Naive thymus-derived CD8-positive, alpha-beta T cell (primary cell): ENCODE measurements at regions of chr6 and their contacts with region 1.

Region 1: DNA sequence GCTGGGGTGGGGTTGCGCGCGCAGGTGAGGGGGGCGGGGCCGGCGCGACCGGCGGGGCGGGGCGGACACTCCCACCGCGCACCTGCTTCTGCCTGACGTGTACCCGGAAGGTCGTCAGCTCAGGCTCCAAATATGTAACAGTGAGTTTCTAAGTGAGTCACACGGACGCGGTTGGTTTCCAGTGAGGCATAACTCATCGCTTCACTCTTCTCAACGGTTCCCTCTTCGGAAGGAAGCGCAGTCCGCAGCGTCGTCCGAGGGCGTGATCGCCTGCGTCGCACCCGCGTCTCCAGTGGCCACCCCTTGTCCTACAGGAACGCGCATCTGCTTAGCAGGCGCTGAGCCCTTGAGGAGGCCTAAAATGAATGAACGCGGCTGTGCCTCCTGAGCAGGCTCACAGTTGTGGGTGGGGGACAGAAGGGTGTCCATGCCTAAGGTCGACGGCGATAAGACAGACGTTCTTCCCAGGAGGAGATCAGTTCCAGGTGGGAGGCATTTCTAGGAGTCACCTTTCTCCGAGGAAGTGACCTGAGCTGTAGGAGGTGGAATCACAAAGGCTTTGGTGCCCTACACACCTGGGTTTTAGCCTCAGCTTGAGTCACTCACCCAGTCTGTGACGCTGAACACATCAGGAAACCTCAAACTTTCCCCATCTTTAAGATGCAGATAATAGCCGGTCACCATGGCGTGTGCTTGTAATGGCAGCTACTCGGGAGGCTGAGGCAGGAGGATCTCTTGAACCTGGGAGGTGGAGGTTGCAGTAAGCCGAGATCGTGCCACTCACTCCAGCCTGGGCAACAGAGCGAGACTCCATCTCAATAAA is 50.9 kb upstream of the EZR start:
- DNase-seq: peak in 3 of 10 donors; percentile 85 to 97 (median 97)
- ATAC-seq: peak; percentile 82 to 83
- H3K4me3 Mint-ChIP-seq: peak overlapping the region; percentile 83 to 96 (median 92)
- H3K27ac Mint-ChIP-seq: peak overlapping the region; percentile 95 to 100 (median 100)
- H3K4me1 Mint-ChIP-seq: peaks cover 6 to 58% (median 30%) of the 10 kb centered on the region in 4 donors
- H3K27me3 Mint-ChIP-seq: no peaks in the 10 kb centered on the region

Region 2: DNA sequence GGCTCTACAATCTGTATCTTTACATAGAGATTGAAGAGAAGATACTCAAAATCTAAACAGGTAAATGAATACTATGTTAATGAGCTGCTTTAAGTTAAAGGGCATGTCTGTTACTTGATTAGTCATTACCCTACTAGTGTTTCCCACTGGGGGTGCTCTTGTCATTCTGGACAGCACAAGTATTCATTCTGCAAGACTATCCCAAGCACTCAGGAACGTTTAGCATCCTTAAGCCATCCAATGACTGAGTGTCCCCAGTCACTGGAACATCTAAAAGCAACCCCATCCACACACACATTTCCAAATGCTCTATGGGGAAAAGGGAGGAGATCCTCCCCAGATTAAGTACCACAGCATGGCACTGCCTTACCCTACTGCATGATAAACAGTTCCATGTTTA is 76.6 kb before region 1 on chr6:
- POLR2A ChIA-PET with region 1: interaction called, 48 read pairs
- DNase-seq: peak in 1 of 10 donors; percentile 45
- ATAC-seq: peak; percentile 16 to 17
- H3K4me3 Mint-ChIP-seq: peak overlapping the region in 3 of 10 donors; percentile 20 to 37 (median 28)
- H3K27ac Mint-ChIP-seq: peak overlapping the region in 5 of 10 donors; percentile 53 to 90 (median 72)
- H3K4me1 Mint-ChIP-seq: peaks cover 38 to 90% (median 78%) of the 10 kb centered on the region in 4 donors
- H3K27me3 Mint-ChIP-seq: no peaks in the 10 kb centered on the region

Region 3: GRCh38 chr6:158803733-158804143 is 66.3 kb before region 1 on chr6:
- POLR2A ChIA-PET with region 1: interaction called, 37 read pairs
- DNase-seq: peak in 6 of 10 donors; percentile 35 to 67 (median 52)
- ATAC-seq: peak; percentile 47 to 66
- H3K4me3 Mint-ChIP-seq: peak overlapping the region; percentile 62 to 86 (median 80)
- H3K27ac Mint-ChIP-seq: peak overlapping the region; percentile 77 to 97 (median 88)
- H3K4me1 Mint-ChIP-seq: peaks cover 47 to 96% (median 92%) of the 10 kb centered on the region in 4 donors
- H3K27me3 Mint-ChIP-seq: no peaks in the 10 kb centered on the region

Region 4: GRCh38 chr6:158808941-158809678 is 60.9 kb before region 1 on chr6:
- POLR2A ChIA-PET with region 1: interaction called, 37 read pairs
- DNase-seq: peak in 5 of 10 donors; percentile 48 to 76 (median 54)
- ATAC-seq: peak; percentile 62 to 72
- H3K4me3 Mint-ChIP-seq: peak overlapping the region in 9 of 10 donors; percentile 41 to 76 (median 63)
- H3K27ac Mint-ChIP-seq: peak overlapping the region; percentile 67 to 97 (median 85)
- H3K4me1 Mint-ChIP-seq: peaks cover 52 to 98% (median 96%) of the 10 kb centered on the region in 4 donors
- H3K27me3 Mint-ChIP-seq: no peaks in the 10 kb centered on the region

Region 5: GRCh38 chr6:158843751-158844683 is 26.0 kb before region 1 on chr6:
- POLR2A ChIA-PET with region 1: interaction called, 15 read pairs
- DNase-seq: no peak
- ATAC-seq: no peak
- H3K4me3 Mint-ChIP-seq: no peak overlapping the region
- H3K27ac Mint-ChIP-seq: peak overlapping the region in 5 of 10 donors; percentile 3 to 72 (median 16)
- H3K4me1 Mint-ChIP-seq: peaks cover 0 to 34% (median 1%) of the 10 kb centered on the region in 4 donors
- H3K27me3 Mint-ChIP-seq: no peaks in the 10 kb centered on the region

Region 6: GRCh38 chr6:158853072-158853871 is 16.8 kb before region 1 on chr6:
- POLR2A ChIA-PET with region 1: interaction called, 189 read pairs
- DNase-seq: peak; percentile 61 to 95 (median 83)
- ATAC-seq: peak; percentile 61 to 70
- H3K4me3 Mint-ChIP-seq: no peak overlapping the region
- H3K27ac Mint-ChIP-seq: no peak overlapping the region
- H3K4me1 Mint-ChIP-seq: peaks cover 13 to 44% (median 32%) of the 10 kb centered on the region in 4 donors
- H3K27me3 Mint-ChIP-seq: no peaks in the 10 kb centered on the region

Region 7: DNA sequence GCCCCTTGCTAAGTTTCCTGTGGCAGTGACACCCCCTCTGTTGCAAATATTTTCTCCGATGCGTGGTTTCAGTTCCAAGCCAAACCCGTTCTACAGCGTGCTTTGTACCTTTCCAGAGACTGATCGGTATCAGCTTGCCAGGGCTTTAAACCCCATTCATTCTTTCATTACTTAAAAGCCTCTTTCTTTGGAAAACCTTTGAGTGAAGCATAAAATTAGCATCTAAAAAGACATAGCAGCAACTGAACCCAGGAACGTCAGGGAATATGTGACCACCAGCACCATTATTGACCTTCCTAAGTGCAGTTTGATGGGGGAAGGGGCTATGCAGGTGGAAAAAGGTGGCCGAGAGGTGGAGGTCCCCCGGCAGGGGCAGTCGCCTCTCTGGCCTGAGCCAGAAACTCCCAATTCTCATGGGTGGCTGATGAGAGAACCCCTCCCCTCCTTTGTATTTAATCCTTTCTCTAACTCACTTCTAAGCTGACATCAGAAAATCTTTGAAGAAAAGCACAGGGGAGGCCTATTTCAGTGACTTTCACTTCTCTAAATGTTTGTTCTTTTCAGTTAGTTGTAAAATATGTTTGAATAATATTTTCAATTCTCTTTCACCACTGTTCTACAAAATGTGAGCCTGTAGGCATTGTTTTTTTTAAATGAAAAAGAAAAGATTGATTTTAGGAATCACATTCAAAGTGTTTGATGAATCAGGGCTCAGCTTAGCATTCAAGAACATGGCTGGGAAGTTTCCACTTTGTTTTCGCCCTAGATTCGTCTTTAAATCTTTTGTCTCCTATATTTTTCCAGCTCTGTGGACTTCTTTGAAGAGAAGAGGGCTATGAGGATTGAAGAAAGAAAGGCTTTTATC is 40.7 kb after region 1 on chr6:
- POLR2A ChIA-PET with region 1: interaction called, 21 read pairs
- DNase-seq: peak in 3 of 10 donors; percentile 16 to 33 (median 27)
- ATAC-seq: peak; percentile 69 to 74
- H3K4me3 Mint-ChIP-seq: peak overlapping the region; percentile 59 to 82 (median 74)
- H3K27ac Mint-ChIP-seq: peak overlapping the region; percentile 66 to 91 (median 86)
- H3K4me1 Mint-ChIP-seq: peaks cover 18 to 49% (median 46%) of the 10 kb centered on the region in 4 donors
- H3K27me3 Mint-ChIP-seq: no peaks in the 10 kb centered on the region